ENCODE measurements at regions of chr2 and their contacts with region 1.

Region 1: GRCh38 chr2:207746131-207746530 is 23.6 kb downstream of the FZD5 start:
- DNase-seq: peak; percentile 36 to 78 (median 58)
- ATAC-seq: peak; percentile 86
- H3K4me3 ChIP-seq: no peak overlapping the region
- H3K27ac ChIP-seq: no peak overlapping the region
- H3K4me1 ChIP-seq: no peaks in the 10 kb centered on the region
- H3K27me3 ChIP-seq: no peaks in the 10 kb centered on the region
- CTCF ChIP-seq: peak; percentile 71 to 86

Region 2: GRCh38 chr2:207394812-207395534 is 351.2 kb before region 1 on chr2:
- intact Hi-C with region 1: no loop called
- DNase-seq: no peak
- ATAC-seq: peak; percentile 59
- H3K4me3 ChIP-seq: no peak overlapping the region
- H3K27ac ChIP-seq: no peak overlapping the region
- H3K4me1 ChIP-seq: no peaks in the 10 kb centered on the region
- H3K27me3 ChIP-seq: no peaks in the 10 kb centered on the region
- CTCF ChIP-seq: no peak

Region 3: DNA sequence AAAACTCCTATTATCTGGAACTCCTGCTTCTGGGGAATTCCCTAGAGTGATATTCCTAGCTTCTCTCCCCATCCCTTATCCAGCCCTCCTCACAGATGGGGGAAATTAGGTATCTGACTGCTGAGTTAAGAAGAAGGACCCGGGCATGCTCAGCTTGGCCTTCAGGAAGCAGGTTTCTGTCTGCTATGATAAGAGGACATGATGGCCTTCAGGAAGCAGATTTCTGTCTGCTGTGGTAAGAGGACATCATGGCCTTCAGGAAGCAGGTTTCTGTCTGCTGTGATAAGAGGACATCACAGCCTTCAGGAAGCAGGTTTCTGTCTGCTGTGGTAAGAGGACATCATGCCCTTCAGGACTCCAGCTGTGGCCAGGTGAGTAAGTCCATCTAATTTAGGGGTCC is 214.0 kb after region 1 on chr2:
- intact Hi-C with region 1: loop called in 1 of 2 experiments (anchors 10 kb)
- DNase-seq: no peak
- ATAC-seq: no peak
- H3K4me3 ChIP-seq: no peak overlapping the region
- H3K27ac ChIP-seq: no peak overlapping the region
- H3K4me1 ChIP-seq: no peaks in the 10 kb centered on the region
- H3K27me3 ChIP-seq: no peaks in the 10 kb centered on the region
- CTCF ChIP-seq: no peak

Region 4: DNA sequence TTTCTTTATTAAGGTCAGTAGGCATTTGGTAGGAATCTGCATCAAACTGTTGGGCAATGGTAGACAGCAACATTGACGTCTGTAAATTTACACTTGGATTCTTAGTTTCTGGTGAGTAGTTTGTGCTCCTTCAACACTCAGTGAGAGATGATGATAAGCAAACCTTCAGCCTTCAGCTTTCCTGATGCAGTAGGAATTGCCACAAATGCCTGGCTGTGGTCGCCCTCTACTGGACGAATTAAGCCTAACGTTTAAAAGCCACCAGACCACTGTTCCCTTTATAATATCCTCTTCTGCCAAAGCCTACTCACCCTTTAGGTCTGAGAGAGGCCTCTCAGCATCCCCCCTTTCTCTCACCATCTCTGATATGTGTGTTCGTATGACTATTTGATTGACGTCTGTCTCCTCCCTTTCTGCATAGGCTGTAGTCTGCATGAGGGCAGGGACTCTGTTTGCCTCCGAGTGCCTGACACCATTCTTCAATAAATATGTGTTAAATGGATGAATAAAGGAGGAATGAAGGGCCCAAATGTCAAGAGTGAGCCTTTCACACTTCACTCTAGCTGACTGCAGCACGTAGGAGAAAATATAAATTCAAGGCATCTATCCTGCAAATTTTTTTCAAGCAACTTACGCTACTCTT is 326.2 kb after region 1 on chr2:
- intact Hi-C with region 1: loop called in 1 of 2 experiments (anchors 10 kb)
- DNase-seq: peak in 3 of 4 donors; percentile 49 to 75 (median 51)
- ATAC-seq: peak; percentile 95
- H3K4me3 ChIP-seq: no peak overlapping the region
- H3K27ac ChIP-seq: no peak overlapping the region
- H3K4me1 ChIP-seq: no peaks in the 10 kb centered on the region
- H3K27me3 ChIP-seq: peaks cover 0 to 4% of the 10 kb centered on the region in 2 donors
- CTCF ChIP-seq: peak; percentile 54 to 73